OCI-LY7 (cell line): ENCODE measurements at regions of chr5 and their contacts with region 1.

Region 1: GRCh38 chr5:95846554-95847260 is 24.2 kb upstream of the GLRX start:
- DNase-seq: peak; percentile 81
- H3K4me3 ChIP-seq: no peak overlapping the region
- H3K27ac ChIP-seq: no peak overlapping the region
- H3K4me1 ChIP-seq: peaks cover 6% of the 10 kb centered on the region
- CTCF ChIP-seq: peak; percentile 99

Region 2: GRCh38 chr5:94968507-94969095 is 878.1 kb before region 1 on chr5:
- CTCF ChIA-PET with region 1: no interaction called
- POLR2A ChIA-PET with region 1: no interaction called
- intact Hi-C with region 1: loop called (anchors 5 kb)
- DNase-seq: peak; percentile 72
- H3K4me3 ChIP-seq: no peak overlapping the region
- H3K27ac ChIP-seq: no peak overlapping the region
- H3K4me1 ChIP-seq: no peaks in the 10 kb centered on the region
- CTCF ChIP-seq: peak; percentile 89

Region 3: GRCh38 chr5:95296291-95296690 is 550.4 kb before region 1 on chr5:
- CTCF ChIA-PET with region 1: no interaction called
- POLR2A ChIA-PET with region 1: no interaction called
- intact Hi-C with region 1: no loop called
- DNase-seq: no peak
- H3K4me3 ChIP-seq: no peak overlapping the region
- H3K27ac ChIP-seq: no peak overlapping the region
- H3K4me1 ChIP-seq: no peaks in the 10 kb centered on the region
- CTCF ChIP-seq: no peak

Region 4: DNA sequence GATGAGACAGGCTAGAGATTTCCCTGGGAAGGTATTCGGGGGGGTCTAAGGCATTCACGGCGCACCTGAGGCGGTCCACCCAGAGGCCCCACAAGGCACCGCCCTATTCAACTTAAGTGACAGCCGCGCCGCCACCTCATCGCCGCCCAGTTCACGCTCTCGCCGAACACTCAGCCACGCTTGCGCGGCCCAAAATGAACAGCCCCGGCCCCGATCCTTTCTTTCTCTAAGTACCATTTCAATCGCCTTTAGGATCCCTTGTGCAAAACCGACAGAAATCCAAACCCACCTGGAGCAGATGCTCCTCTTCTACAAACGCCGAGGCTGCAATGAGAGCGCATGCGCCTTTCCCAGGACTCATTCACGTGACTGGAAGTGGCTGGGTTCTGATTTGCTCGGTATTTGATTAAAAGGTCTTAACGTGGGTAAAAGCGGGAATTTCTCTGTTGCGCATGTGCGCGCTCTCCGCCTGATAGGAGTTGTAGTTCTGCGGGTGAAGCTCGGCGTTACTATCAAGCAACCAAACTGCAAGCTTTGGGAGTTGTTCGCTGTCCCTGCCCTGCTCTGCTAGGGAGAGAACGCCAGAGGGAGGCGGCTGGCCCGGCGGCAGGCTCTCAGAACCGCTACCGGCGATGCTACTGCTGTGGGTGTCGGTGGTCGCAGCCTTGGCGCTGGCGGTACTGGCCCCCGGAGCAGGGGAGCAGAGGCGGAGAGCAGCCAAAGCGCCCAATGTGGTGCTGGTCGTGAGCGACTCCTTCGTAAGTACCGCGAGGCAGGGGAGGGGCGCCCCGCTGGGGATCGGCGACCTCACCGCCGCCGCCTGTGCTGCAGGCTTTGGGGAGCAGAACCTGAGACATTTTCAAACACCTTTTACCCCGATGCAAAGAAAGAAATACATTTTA is 291.8 kb before region 1 on chr5 and contains the starts of genes ARSK and SKIC3:
- CTCF ChIA-PET with region 1: no interaction called
- POLR2A ChIA-PET with region 1: no interaction called
- intact Hi-C with region 1: loop called (anchors 5 kb)
- DNase-seq: peak; percentile 99
- H3K4me3 ChIP-seq: peak within 1 kb of the TSS; percentile 81
- H3K27ac ChIP-seq: peak within 1 kb of the TSS; percentile 71
- H3K4me1 ChIP-seq: peaks cover 15% of the 10 kb centered on the region
- CTCF ChIP-seq: 0 out of 2 replicates have a peak, but pooled peaks have one; percentile 30
- total RNA-seq, gene ARSK: 4.1 and 5.9 TPM in 2 replicates
- total RNA-seq, gene SKIC3: 53.0 and 55.4 TPM in 2 replicates

Region 5: DNA sequence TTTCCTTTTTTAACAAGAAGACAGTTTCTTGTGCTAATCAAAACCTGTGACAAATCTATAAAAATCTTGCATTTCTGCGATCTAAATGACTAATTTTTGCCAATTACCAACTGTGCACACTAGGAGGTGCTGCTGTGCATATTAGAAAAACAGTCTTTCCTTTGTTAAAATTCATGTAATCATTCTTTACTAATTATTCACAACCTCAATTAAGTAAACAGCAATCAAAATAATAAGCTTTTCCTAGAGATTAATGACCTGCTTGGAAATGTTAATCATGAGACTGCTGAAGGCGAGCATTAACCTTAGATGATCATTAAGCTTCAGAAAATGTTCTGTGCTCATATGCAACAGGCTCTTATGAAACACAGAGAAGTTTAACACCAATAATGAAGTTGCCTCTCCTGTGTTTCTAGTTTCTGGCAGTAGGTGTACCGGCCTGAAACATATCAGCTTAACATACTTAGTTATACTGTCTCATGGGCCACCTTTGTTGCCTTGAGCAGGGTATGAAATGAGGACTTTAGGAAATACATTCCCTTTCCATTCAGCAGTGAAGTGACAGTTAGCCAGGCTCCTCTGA is 182.4 kb before region 1 on chr5:
- CTCF ChIA-PET with region 1: no interaction called
- POLR2A ChIA-PET with region 1: interaction called, 7 read pairs
- intact Hi-C with region 1: loop called (anchors 5 kb)
- DNase-seq: peak; percentile 42
- H3K4me3 ChIP-seq: no peak overlapping the region
- H3K27ac ChIP-seq: no peak overlapping the region
- H3K4me1 ChIP-seq: no peaks in the 10 kb centered on the region
- CTCF ChIP-seq: peak; percentile 98

Region 6: DNA sequence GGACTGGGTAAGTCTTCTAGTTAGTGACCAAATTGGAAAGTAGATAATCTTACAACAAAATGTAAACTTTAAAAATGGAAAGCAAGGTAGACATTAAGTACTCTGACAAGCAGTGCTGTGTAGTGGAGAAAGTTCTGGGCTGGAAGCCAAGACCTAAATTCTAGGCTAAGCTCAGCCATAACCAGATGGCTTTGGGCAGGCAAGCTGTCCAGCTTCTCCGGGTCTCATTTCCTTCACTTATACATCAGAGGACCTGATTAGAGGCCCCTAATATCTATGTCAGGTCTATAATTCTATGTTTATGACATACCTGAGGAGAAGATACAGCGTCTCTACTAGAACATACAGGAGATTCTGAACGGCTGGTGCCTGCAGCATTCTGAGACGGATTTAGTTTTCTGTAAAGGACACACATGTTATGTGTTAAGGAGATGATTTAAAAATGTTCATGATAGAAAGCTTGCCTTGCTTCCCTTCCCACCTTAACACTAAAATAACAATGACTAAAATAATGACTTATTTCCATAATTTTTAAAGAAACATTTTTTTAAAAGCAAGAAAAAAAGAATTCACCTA is 53.8 kb after region 1 on chr5:
- CTCF ChIA-PET with region 1: no interaction called
- POLR2A ChIA-PET with region 1: no interaction called
- intact Hi-C with region 1: no loop called
- DNase-seq: no peak
- H3K4me3 ChIP-seq: no peak overlapping the region
- H3K27ac ChIP-seq: no peak overlapping the region
- H3K4me1 ChIP-seq: no peaks in the 10 kb centered on the region
- CTCF ChIP-seq: no peak